ENCODE measurements at regions of chr11 and their contacts with region 1.

Region 1: DNA sequence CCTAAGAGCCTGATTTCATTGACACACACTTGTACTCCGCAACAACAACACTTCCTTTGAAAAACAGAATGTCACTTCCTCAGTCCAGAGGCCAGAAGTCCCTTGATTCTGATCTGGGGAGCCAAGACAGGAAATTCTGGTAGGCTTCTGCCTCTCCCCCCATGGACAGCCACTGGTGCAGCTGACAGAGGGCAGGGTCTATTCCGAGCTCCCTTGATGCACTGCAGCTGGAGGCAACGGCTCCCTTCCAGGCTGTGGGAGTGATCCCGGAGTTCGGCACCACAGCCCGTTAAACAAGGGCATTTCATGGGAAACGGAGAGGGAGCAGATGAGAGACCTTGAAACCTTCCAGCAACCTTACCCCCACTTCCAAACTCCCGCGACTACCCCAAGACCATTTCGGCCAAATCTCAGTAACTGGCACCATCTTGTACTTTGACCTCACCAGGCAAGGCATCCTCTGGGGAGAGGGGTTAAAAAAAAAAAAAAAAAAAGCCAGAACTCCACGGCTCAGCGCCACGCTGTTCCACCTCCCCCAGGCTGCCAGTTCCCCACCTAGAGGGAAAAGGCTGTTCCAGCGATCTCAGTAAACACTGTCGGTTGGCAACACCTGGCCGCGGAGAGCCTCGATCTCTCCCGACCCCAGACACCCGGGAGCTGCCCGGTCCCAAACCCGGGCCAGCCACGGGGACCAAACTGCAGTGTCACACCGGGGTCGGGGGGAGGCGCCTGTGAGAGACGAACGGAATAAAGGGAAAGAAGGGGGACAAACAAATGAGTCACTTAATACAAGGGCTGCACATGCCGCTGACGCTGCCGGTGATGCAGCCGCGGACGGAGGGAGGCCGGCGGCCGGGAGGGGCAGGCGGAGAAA is 1.1 kb downstream of the GAB2 start:
- DNase-seq: peak; percentile 78 to 94
- H3K4me3 ChIP-seq: peak overlapping the region; percentile 82 to 84
- H3K27ac ChIP-seq: peak overlapping the region; percentile 98 to 100
- H3K4me1 ChIP-seq: peaks cover 0 to 19% of the 10 kb centered on the region in 2 donors
- H3K27me3 ChIP-seq: no peaks in the 10 kb centered on the region
- CTCF ChIP-seq: peak in 2 of 3 experiments; percentile 50 to 53

Region 2: DNA sequence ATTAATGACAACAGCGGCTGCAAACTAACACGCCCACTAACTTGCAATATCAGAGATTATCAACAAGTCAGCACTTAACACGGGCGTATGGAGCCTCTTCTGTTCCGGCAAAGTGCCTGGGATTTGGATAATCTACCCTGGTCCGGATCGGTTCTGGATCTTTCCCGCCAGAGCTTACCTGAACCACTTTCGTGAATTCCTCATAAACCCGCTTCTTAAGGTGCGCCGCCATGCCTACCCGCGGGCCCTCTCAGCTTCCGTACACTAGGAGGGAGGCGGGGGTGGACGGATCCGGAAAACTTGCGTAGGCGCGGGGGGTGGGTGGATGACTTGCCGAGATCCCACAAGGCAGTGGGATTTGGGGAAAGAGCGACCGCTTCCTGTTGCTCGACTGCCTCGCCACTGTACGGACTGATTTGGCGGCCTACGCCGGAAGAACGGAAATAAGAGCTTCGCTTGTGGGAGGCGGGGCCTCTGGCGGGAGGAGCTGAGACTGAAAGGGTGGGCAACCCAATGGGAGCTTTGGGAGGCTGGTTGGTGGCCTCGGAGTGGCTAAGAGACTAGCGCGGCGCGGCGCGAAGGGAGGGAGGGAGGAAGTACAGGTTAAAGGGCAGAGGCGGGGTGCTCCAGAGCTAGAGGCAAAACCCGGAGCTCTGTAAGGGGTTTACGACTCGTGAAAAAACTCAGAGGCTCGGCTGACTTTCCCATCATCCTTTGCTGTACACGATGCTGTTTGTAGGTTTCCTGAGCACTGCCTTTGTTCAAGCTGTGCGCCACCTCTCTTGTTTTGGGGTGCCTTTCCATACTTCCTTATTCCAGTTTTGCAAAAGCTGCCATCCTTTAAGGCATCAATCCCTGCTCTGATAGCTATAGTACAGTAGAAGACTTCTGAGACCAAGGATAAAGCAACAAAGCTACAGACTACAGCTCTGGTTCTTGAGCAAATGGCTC is 421.9 kb before region 1 on chr11 and contains the start of gene INTS4:
- intact Hi-C with region 1: loop called (anchors 5 kb)
- DNase-seq: peak; percentile 97 to 99
- H3K4me3 ChIP-seq: peak within 1 kb of the TSS; percentile 63 to 65
- H3K27ac ChIP-seq: peak within 1 kb of the TSS; percentile 79
- H3K4me1 ChIP-seq: peaks cover 0 to 11% of the 10 kb centered on the region in 2 donors
- H3K27me3 ChIP-seq: no peaks in the 10 kb centered on the region
- CTCF ChIP-seq: peak in 1 of 3 experiments; percentile 15
- total RNA-seq, gene INTS4: 10.7 TPM

Region 3: DNA sequence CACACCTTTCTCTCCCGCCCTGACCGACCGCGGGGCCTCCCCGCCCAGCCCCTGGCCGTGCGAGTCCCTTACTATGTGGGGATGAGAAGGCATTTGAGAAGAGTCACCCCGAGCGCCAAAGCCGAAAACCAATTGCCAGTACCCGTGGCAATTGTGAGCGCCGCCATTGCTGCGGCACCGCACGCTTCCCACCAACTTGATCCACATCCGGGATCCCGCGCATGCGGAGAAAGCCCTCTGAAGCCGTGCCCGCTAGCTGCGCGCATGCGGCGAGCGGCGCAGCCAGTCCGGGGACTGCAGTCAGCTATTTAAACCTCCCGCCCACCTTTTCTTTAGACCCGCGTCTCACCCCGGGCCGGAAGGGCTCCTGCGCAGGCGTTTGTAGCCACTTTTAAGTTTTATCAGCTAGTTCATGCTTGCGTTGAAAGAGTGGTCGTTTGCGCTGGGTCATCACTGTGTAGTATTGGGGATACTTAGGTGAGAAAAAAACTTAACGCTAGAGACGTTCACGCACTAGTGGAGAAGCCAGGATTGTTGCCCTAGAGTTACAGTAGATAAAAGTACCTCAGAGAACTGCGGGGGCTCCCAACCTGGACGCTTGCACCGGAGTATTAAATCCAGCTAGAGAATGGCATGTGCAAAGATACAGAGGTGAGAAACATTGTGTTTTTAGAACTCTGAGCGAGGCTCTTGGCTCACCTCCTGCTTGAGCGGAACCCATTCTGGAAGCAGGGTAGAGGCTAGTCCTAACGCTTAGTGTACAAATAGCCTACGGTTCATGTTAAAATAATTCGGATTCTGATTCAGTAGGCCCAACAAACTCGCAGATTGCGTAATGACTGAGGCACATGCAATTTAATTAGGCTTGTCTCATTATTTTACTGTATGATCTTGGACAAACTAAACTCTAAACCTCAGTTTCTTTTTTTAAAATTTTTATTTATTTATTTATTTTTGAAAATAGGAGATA is 276.8 kb before region 1 on chr11 and contains the start of gene ALG8:
- intact Hi-C with region 1: loop called (anchors 5 kb)
- DNase-seq: peak; percentile 78 to 97
- H3K4me3 ChIP-seq: peak within 1 kb of the TSS; percentile 73 to 77
- H3K27ac ChIP-seq: peak within 1 kb of the TSS; percentile 54 to 75
- H3K4me1 ChIP-seq: peaks cover 7 to 14% of the 10 kb centered on the region in 2 donors
- H3K27me3 ChIP-seq: no peaks in the 10 kb centered on the region
- CTCF ChIP-seq: no peak
- total RNA-seq, gene ALG8: 27.0 TPM

Region 4: DNA sequence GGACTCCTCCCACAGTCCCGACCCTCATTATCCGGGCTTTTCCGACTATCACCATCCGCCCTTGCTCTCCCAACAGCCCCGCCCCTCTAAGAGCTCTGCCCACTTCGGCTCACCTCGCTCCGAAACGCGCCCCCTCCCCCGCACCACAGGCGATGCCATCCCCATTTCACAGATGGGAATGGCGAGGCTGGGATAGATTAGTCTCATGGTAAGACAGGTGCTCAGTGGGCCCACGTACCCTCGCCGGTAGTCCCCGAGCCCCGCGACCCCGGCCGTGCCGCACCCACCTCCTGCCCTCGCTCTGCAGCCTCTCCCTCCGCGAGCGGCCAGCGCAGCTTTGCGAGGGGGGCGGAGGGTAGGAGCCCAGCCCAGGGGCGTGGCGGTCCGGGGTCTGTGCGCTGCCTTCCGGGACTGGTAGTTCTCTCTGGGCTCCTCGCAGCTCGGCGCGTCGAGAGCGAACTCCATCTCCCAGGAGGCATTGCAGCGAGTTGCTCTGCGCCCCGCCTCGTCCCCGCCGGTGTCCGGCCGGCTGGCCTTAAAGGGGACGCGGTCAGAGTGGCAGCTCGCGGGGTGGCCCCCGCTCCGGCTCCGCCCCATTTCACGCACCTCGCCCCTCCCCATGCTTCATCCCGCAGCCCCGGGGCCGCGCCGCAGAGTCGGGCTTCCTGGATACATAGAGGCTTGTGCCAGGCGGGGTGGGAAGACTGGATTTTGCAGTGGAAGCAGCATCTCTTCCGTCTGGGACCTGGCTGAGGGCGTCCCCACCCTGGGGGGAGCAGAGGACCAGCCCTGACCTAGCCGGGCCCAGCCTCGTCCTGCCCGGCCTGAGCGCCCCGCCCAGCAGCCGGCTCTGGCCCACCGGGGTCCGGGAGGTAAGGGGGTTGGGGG is 228.0 kb before region 1 on chr11 and contains the starts of genes KCTD21 and USP35:
- intact Hi-C with region 1: loop called (anchors 1 kb)
- DNase-seq: peak; percentile 95 to 99
- H3K4me3 ChIP-seq: peak within 1 kb of the TSS; percentile 72 to 91
- H3K27ac ChIP-seq: peak within 1 kb of the TSS; percentile 87 to 91
- H3K4me1 ChIP-seq: peaks cover 8 to 43% of the 10 kb centered on the region in 2 donors
- H3K27me3 ChIP-seq: no peaks in the 10 kb centered on the region
- CTCF ChIP-seq: no peak
- total RNA-seq, gene KCTD21: 30.7 TPM
- total RNA-seq, gene USP35: 34.0 TPM

Region 5: DNA sequence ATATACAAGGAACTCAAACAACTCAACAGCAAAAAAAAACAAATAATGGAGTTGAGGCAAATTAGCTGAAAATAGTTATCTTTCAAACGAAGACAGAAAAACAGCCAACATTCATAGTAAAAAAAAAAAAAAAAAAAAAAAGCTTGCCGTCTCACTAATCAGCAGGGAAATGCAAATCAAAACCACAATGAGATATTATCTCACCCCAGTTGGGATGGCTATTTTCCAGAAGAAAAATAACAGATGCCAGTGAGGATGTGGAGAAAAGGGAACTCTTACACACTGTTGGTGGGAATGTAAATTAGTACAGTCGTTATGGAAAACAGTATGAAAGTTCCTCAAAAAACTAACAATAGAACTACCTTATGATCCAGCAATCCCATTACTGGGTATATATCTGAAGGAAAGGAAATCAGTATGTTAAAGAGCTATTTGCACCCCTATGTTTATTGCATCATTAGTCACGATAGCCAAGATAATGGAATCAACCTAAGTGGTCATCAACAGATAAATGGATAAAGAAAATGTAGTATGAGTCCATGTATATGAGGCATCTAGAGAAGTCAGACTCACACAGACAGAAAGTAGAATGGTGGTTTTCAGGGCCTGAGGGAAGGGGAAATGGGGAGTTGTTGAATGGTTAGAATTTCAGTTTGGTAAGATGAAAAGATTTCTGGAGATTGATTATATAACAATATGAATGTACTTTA is 171.8 kb before region 1 on chr11:
- intact Hi-C with region 1: no loop called
- DNase-seq: no peak
- H3K4me3 ChIP-seq: no peak overlapping the region
- H3K27ac ChIP-seq: peak overlapping the region; percentile 53 to 67
- H3K4me1 ChIP-seq: peaks cover 0 to 5% of the 10 kb centered on the region in 2 donors
- H3K27me3 ChIP-seq: no peaks in the 10 kb centered on the region
- CTCF ChIP-seq: no peak

Region 6: GRCh38 chr11:78310500-78310909 is 106.0 kb before region 1 on chr11:
- intact Hi-C with region 1: loop called (anchors 2 kb)
- DNase-seq: peak; percentile 16 to 84
- H3K4me3 ChIP-seq: peak overlapping the region; percentile 9 to 12
- H3K27ac ChIP-seq: peak overlapping the region; percentile 74 to 79
- H3K4me1 ChIP-seq: peaks cover 18 to 51% of the 10 kb centered on the region in 2 donors
- H3K27me3 ChIP-seq: no peaks in the 10 kb centered on the region
- CTCF ChIP-seq: no peak

Measured in ascending aorta (tissue), 2 donors.